ENCODE measurements at regions of chr19 and their contacts with region 1.

Region 1: DNA sequence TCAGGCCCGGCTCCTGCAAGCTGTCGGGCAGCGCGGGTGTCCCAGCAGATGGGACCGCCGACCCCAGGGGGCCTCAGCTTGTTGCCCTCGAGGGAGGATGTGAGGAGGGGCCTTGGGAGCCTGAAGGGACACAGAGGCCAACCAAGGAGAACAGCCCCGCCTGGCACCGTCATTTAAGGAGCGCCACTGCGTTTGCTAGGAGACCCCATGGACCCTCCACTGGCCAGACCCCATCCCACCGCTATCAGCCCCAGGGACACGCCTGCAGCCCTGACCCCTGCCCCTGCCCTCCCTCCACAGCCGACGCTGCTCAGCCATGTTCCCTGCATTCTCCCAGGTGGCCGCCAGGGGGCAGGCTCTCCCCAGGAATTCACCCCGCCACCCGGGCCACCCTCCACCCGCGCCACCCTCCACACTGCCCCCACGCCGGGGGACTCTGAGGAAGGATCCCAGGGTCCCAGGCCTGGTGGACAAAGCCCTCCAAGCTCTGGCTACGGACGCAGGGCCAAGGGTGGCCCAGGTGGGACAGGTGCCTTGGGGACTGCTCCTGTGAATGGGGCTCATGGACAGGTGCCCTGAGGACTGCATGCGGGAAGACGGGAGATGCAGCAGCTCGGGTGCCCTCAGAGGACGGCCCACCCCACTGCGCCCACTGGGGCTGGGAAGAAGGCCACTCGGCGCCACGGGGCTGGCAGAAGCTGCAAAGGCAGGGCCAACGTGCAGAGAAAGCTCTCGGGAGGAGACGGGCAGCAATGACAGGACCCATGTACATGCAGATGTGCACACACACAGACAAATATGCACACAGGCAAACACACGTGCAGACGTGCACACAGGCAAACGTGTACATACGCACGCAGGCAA is 34.4 kb downstream of the PIP5K1C start:
- DNase-seq: peak; percentile 60 to 89 (median 79)
- ATAC-seq: peak; percentile 93
- H3K4me3 ChIP-seq: no peak overlapping the region
- H3K4me3 Mint-ChIP-seq: no peak overlapping the region
- H3K27ac ChIP-seq: no peak overlapping the region
- H3K27ac Mint-ChIP-seq: peak overlapping the region in 3 of 9 donors; percentile 10 to 65 (median 41)
- H3K4me1 ChIP-seq: peaks cover 0 to 7% of the 10 kb centered on the region in 2 donors
- H3K4me1 Mint-ChIP-seq: peaks cover 0 to 13% (median 5%) of the 10 kb centered on the region in 7 donors
- H3K27me3 ChIP-seq: no peaks in the 10 kb centered on the region
- H3K27me3 Mint-ChIP-seq: no peaks in the 10 kb centered on the region

Region 2: GRCh38 chr19:3403489-3404323 is 262.2 kb before region 1 on chr19:
- CTCF ChIA-PET with region 1: no interaction called
- POLR2A ChIA-PET with region 1: no interaction called
- intact Hi-C with region 1: no loop called
- DNase-seq: no peak
- ATAC-seq: no peak
- H3K4me3 ChIP-seq: no peak overlapping the region
- H3K4me3 Mint-ChIP-seq: no peak overlapping the region
- H3K27ac ChIP-seq: no peak overlapping the region
- H3K27ac Mint-ChIP-seq: no peak overlapping the region
- H3K4me1 ChIP-seq: no peaks in the 10 kb centered on the region
- H3K4me1 Mint-ChIP-seq: peaks cover 0 to 18% (median 5%) of the 10 kb centered on the region in 7 donors
- H3K27me3 ChIP-seq: no peaks in the 10 kb centered on the region
- H3K27me3 Mint-ChIP-seq: no peaks in the 10 kb centered on the region

Region 3: DNA sequence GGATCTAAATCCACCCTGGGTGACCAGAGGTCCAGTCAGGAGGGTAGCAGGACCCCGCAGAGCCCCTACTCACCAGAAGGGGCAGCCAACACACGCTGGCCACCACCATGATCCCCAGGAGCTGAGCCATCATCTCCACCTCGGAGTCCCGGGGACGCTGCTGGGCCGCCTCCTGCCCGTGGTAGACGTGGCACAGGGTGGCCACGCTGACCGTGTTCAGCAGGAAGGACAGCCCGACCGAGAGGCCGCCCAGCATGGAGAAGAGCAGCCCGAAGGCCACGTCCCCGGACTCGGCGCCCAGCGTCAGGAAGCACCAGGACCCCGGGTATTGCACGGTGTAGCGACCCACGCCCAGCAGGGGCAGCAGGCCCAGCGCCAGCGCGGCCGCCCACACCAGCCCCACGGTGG is 66.1 kb before region 1 on chr19:
- CTCF ChIA-PET with region 1: no interaction called
- POLR2A ChIA-PET with region 1: no interaction called
- intact Hi-C with region 1: no loop called
- DNase-seq: no peak
- ATAC-seq: no peak
- H3K4me3 ChIP-seq: no peak overlapping the region
- H3K4me3 Mint-ChIP-seq: no peak overlapping the region
- H3K27ac ChIP-seq: no peak overlapping the region
- H3K27ac Mint-ChIP-seq: no peak overlapping the region
- H3K4me1 ChIP-seq: peaks cover 5 to 7% of the 10 kb centered on the region in 2 donors
- H3K4me1 Mint-ChIP-seq: no peaks in the 10 kb centered on the region
- H3K27me3 ChIP-seq: no peaks in the 10 kb centered on the region
- H3K27me3 Mint-ChIP-seq: no peaks in the 10 kb centered on the region

Region 4: DNA sequence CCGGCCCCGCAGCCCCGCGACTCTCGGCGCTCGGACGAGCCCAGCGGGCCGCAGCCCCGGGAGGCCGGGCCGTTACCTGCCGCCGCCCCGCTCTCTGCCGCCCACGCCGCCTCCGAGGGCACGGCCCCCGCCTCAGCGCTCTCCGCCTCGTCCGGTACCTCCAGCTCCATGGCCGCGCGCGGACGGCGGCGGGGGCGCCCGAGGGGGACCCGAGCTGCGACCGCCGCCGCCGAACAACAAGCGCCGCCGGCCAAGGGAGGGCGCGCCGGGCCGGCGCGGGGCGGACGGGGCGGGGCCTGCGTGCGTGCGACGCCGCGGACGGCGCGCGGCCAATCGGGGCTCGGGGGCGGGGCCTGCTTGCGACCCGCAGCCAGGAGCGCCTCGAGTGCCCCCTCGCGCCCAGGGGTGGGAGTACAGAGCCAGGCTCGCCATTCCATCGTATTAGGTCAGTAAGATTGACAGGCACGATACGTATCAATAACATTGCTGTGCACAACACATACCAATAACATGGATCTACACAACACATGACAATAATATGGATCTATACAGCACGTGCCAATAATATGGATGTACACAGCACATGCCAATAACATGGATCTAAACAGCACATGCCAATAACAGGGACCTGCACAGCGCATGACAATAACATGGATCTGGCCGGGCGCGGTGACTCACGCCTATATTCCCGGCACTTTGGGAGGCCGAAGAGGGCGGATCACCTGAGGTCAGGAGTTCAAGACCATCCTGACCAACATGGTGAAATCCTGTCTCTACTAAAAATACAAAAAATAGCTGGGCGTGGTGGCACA is 34.5 kb after region 1 on chr19 and contains the start of gene PIP5K1C:
- CTCF ChIA-PET with region 1: interaction called, 5 read pairs
- POLR2A ChIA-PET with region 1: no interaction called
- intact Hi-C with region 1: loop called (anchors 1 kb)
- DNase-seq: peak; percentile 82 to 98 (median 90)
- ATAC-seq: peak; percentile 100
- H3K4me3 ChIP-seq: peak within 1 kb of the TSS; percentile 66
- H3K4me3 Mint-ChIP-seq: peak within 1 kb of the TSS; percentile 88 to 97 (median 92)
- H3K27ac ChIP-seq: peak within 1 kb of the TSS; percentile 67
- H3K27ac Mint-ChIP-seq: peak within 1 kb of the TSS in 8 of 9 donors; percentile 60 to 91 (median 82)
- H3K4me1 ChIP-seq: peaks cover 0 to 9% of the 10 kb centered on the region in 2 donors
- H3K4me1 Mint-ChIP-seq: peaks cover 6 to 41% (median 28%) of the 10 kb centered on the region in 7 donors
- H3K27me3 ChIP-seq: no peaks in the 10 kb centered on the region
- H3K27me3 Mint-ChIP-seq: peaks cover 0 to 6% (median 0%) of the 10 kb centered on the region in 5 donors
- total RNA-seq, gene PIP5K1C: 21.5 to 32.4 (median 30.7) TPM

Region 5: DNA sequence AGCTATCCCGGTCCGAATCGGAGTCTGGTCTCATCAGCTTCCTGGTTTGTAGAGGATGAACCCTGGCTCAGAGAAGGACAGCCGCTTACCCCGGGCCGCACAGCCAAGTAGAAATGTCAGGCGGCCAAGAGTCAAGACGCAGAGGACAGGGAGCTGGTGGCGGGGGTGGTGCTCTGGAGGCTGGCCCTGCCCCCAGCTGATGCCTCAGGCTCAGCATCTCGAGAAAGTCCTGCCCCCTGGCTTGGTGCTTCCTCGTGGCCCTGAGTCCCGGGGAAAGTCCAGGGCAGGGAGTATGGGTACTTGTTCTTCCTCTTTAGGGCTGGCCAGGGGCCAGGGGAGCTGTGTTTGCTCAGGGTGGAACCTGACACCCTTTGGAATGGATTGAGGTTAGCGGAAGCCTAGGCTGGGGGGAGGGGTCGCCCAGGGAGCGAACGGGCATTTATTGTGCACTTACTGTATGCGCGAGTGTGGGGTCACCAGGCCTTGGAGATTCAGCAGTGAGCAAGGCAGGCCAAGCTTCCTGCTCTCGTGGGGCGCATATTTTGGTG is 44.4 kb after region 1 on chr19:
- CTCF ChIA-PET with region 1: interaction called, 3 read pairs
- POLR2A ChIA-PET with region 1: no interaction called
- intact Hi-C with region 1: loop called (anchors 1 kb)
- DNase-seq: no peak
- ATAC-seq: peak; percentile 83
- H3K4me3 ChIP-seq: no peak overlapping the region
- H3K4me3 Mint-ChIP-seq: no peak overlapping the region
- H3K27ac ChIP-seq: no peak overlapping the region
- H3K27ac Mint-ChIP-seq: no peak overlapping the region
- H3K4me1 ChIP-seq: no peaks in the 10 kb centered on the region
- H3K4me1 Mint-ChIP-seq: peaks cover 0 to 12% (median 5%) of the 10 kb centered on the region in 7 donors
- H3K27me3 ChIP-seq: no peaks in the 10 kb centered on the region
- H3K27me3 Mint-ChIP-seq: peaks cover 0 to 11% (median 0%) of the 10 kb centered on the region in 5 donors

Region 6: DNA sequence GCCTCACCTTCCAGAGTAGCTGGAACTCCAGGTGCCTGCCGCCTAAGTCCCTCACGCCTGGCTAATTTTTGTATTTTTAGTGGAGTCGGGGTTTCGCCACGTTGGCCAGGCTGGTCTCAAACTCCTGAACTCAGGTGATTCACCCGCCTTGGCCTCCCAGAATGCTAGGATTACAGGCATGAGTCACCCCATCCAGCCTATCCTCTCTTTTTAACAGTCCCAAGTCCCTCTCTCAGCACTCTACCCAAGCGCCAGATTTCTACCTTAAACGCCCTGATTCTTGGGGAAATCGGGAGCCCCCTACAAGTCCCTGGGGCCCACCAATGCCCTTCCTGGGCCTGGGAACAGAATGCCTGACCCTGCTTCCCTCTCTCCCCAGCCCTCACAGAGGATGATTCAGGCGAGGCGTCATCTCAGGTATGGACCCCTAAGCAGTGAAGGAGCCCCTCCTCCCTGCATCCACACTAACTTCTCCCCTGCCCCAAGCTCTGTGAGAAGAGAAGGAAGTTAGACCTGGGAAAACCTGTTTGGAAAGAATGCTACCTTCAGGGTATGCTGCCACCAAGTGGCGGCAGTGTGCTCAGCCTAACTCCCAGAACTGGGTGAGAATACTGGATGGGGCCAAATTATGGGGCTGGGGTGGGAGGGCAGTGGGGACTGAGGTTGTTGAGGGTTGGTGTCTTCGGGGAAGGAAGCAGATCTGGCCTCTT is 542.6 kb after region 1 on chr19:
- CTCF ChIA-PET with region 1: no interaction called
- POLR2A ChIA-PET with region 1: no interaction called
- intact Hi-C with region 1: loop called in 1 of 2 experiments (anchors 1 kb)
- DNase-seq: no peak
- ATAC-seq: no peak
- H3K4me3 ChIP-seq: no peak overlapping the region
- H3K4me3 Mint-ChIP-seq: no peak overlapping the region
- H3K27ac ChIP-seq: no peak overlapping the region
- H3K27ac Mint-ChIP-seq: no peak overlapping the region
- H3K4me1 ChIP-seq: no peaks in the 10 kb centered on the region
- H3K4me1 Mint-ChIP-seq: peaks cover 0 to 6% (median 3%) of the 10 kb centered on the region in 7 donors
- H3K27me3 ChIP-seq: no peaks in the 10 kb centered on the region
- H3K27me3 Mint-ChIP-seq: peaks cover 0 to 3% (median 0%) of the 10 kb centered on the region in 5 donors

Measured in naive thymus-derived CD4-positive, alpha-beta T cell (primary cell).